Sciatic nerve (tissue), 2 donors: ENCODE measurements at regions of chr17 and their contacts with region 1.

Region 1: DNA sequence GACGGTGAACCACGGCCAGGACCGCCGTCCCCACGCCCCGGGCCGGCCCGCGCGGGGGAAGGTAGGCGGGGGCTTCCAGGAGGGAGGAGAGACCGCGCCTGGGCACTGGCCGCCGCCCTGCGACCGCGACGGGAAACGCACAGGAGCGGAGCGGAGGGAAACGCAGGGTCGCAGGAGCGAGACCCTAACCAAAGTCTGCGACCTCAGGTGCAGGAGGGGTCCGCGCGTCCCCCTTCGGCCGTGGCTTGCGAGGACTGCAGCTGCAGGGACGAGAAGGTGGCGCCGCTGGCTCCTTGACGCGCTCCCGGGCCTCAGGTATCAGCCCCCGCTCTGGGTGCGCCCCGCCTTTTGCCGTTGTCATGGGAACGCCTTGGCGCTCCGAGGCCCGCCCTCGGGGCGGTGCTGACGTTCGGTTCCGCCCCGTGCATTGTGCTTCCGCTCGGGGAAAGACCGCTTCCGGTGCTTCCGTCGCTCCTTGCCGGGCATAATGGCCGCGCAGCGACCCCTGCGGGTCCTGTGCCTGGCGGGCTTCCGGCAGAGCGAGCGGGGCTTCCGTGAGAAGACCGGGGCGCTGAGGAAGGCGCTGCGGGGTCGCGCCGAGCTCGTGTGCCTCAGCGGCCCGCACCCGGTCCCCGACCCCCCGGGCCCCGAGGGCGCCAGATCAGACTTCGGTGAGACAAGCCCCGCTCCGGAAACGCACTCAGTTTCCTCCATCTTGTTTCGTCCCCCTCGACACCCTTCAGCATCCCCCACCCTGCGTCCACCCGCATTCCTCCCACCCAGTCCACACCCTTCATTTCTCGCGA is at the start of gene OVCA2:
- DNase-seq: peak; percentile 97
- ATAC-seq: peak; percentile 95
- total RNA-seq, gene OVCA2: 12.9 TPM

Region 2: GRCh38 chr17:1340371-1340770 is 701.4 kb before region 1 on chr17:
- intact Hi-C with region 1: no loop called
- DNase-seq: no peak
- ATAC-seq: no peak

Region 3: GRCh38 chr17:1915889-1916288 is 125.9 kb before region 1 on chr17:
- intact Hi-C with region 1: loop called (anchors 10 kb)
- DNase-seq: no peak
- ATAC-seq: no peak

Region 4: GRCh38 chr17:1997927-1998784 is 43.6 kb before region 1 on chr17:
- intact Hi-C with region 1: no loop called
- DNase-seq: no peak
- ATAC-seq: no peak

Region 5: DNA sequence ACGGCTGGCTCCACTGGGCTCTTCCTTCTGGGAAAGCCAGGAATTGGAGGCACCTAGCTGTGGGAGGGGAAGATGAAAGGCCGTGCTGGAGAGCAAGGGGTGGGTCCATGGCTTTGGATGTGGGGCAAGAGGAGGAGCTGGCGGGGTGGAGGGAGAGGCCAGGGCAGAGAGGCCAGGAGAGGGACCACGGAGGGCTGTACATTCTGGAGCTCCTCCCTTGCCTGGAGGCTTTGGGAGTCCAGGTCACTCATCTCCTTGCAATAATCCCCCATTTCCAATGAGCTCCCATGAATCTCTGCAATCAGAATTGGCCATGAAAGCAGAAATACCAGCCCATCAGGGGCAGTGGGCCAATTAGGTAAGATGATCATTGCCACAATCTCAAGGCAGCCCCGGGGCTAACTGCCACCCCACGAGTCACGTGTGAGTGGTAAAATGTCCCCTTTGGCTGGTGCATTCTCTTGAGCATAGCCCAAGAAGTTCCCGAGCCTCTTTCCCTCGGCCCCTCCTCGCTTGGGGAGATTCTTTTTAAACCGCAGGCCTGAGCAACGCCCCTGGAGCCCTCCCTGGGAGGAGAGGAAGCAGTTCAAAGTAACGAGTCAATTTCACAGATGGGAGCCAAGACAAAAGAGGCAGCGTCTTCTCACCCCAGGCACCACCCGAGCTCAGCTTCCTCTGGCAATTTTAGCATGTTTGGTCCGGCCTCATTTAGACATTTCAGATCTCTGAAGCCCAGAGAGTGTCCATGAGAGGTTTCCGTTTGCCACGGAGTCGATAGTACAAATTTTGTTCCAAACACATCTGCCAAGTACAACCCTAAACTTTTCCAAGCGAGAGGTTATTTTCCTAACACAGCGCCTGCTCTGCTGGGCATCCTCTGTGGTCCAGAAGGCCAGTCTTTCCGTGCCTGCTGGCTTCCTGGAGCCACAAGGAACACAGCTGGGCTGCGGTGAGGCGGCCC is 30.1 kb before region 1 on chr17:
- intact Hi-C with region 1: no loop called
- DNase-seq: peak; percentile 76
- ATAC-seq: peak; percentile 92

Region 6: GRCh38 chr17:2025622-2026310 is 16.0 kb before region 1 on chr17:
- intact Hi-C with region 1: no loop called
- DNase-seq: peak; percentile 87
- ATAC-seq: peak; percentile 43